Upper lobe of right lung (tissue), 1 donor: ENCODE measurements at regions of chr14 and their contacts with region 1.

Region 1: GRCh38 chr14:105045710-105046326 is 19.4 kb downstream of the GPR132 start:
- DNase-seq: peak; percentile 96
- ATAC-seq: peak; percentile 98
- H3K4me3 ChIP-seq: no peak overlapping the region
- H3K27ac ChIP-seq: no peak overlapping the region
- H3K4me1 ChIP-seq: peaks cover 6% of the 10 kb centered on the region
- H3K27me3 ChIP-seq: no peaks in the 10 kb centered on the region
- CTCF ChIP-seq: peak; percentile 100

Region 2: GRCh38 chr14:104895786-104896661 is 149.8 kb before region 1 on chr14:
- intact Hi-C with region 1: loop called (anchors 10 kb)
- DNase-seq: peak; percentile 87
- ATAC-seq: peak; percentile 57
- H3K4me3 ChIP-seq: peak overlapping the region; percentile 16
- H3K27ac ChIP-seq: no peak overlapping the region
- H3K4me1 ChIP-seq: no peaks in the 10 kb centered on the region
- H3K27me3 ChIP-seq: no peaks in the 10 kb centered on the region
- CTCF ChIP-seq: no peak

Region 3: DNA sequence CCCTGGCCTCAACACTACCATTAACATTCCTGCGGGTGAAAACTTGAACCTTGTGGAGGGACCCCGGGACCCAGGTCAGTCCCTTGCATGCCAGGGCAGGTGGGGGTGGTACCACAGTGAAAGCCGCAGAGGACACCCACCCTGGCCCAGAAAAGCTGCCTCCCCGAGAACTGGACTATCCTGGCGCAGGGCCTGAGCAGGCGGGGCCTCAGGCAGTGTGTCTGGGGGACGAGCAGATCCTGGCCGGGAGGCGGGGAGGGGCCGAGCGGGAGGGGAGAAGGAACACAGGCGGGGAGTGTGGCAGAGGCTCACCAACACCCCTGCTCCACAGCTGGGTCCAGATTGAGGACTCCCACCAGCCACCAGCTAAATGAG is 77.7 kb before region 1 on chr14:
- intact Hi-C with region 1: loop called (anchors 5 kb)
- DNase-seq: peak; percentile 80
- ATAC-seq: peak; percentile 2
- H3K4me3 ChIP-seq: peak overlapping the region; percentile 39
- H3K27ac ChIP-seq: peak overlapping the region; percentile 42
- H3K4me1 ChIP-seq: peaks cover 46% of the 10 kb centered on the region
- H3K27me3 ChIP-seq: peaks cover 10% of the 10 kb centered on the region
- CTCF ChIP-seq: no peak